PC-9 (cell line): ENCODE measurements at regions of chrX and their contacts with region 1.

Region 1: GRCh38 chrX:154484255-154485154 is 1.9 kb downstream of the UBL4A start:
- DNase-seq: peak in 1 of 2 experiments; percentile 71
- H3K4me3 ChIP-seq: no peak overlapping the region
- H3K27ac ChIP-seq: no peak overlapping the region
- H3K4me1 ChIP-seq: peaks cover 24% of the 10 kb centered on the region
- H3K27me3 ChIP-seq: no peaks in the 10 kb centered on the region
- CTCF ChIP-seq: no peak

Region 2: GRCh38 chrX:154419732-154420364 is 64.7 kb before region 1 on chrX:
- CTCF ChIA-PET with region 1: no interaction called
- POLR2A ChIA-PET with region 1: no interaction called
- intact Hi-C with region 1: no loop called
- DNase-seq: no peak
- H3K4me3 ChIP-seq: no peak overlapping the region
- H3K27ac ChIP-seq: no peak overlapping the region
- H3K4me1 ChIP-seq: no peaks in the 10 kb centered on the region
- H3K27me3 ChIP-seq: no peaks in the 10 kb centered on the region
- CTCF ChIP-seq: no peak

Region 3: GRCh38 chrX:154458114-154458953 is 26.2 kb before region 1 on chrX and contains the start of gene PLXNA3:
- CTCF ChIA-PET with region 1: no interaction called
- POLR2A ChIA-PET with region 1: interaction called, 9 read pairs
- intact Hi-C with region 1: loop called (anchors 2 kb)
- DNase-seq: peak in 1 of 2 experiments; percentile 76
- H3K4me3 ChIP-seq: peak within 1 kb of the TSS; percentile 66
- H3K27ac ChIP-seq: no peak within 1 kb of the TSS
- H3K4me1 ChIP-seq: peaks cover 5% of the 10 kb centered on the region
- H3K27me3 ChIP-seq: no peaks in the 10 kb centered on the region
- CTCF ChIP-seq: no peak
- total RNA-seq, gene PLXNA3: 109 and 124 TPM in 2 replicates

Region 4: DNA sequence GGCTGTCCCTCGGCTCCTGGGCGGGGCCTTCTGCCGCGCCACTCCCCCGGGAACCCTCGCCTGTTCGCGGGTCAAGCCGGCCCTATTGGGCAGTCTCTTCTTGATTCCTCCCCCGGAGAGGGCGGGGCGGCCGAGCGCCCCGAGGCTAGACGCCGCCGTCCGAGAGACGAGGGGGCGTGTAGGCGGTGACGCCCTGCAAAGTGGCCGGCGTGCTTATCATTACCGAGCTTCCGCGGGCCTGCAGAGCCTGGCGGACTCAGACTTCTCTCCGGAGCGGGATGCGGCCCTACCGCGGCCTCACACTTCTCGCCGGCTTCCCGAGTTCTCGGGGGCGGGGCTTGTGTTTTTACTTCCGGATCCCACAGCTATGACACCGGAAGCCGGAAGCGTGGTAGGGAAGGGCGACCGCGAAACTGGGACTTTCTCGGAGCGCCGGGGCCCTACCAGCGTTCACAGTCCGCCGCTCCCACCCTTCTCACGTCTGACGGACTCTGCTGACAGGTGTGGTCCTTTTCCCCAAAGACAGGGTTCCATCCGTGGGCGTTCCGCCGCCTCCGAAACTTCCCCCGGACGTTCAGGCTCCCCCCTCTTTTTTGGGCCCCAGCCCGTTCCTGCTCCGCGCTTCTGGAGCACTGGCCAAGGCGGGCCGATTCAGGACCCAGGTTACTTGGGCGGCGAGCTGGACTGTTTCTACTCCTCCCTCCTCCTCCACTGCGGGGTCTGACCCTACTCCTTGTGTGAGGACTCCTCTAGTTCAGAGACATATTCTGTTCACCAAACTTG is 62.9 kb after region 1 on chrX and contains the start of gene IKBKG:
- CTCF ChIA-PET with region 1: no interaction called
- POLR2A ChIA-PET with region 1: interaction called, 23 read pairs
- intact Hi-C with region 1: no loop called
- DNase-seq: peak; percentile 82 to 98
- H3K4me3 ChIP-seq: peak within 1 kb of the TSS; percentile 99
- H3K27ac ChIP-seq: peak within 1 kb of the TSS; percentile 100
- H3K4me1 ChIP-seq: peaks cover 27% of the 10 kb centered on the region
- H3K27me3 ChIP-seq: no peaks in the 10 kb centered on the region
- CTCF ChIP-seq: no peak
- total RNA-seq, gene IKBKG: 68.3 and 69.4 TPM in 2 replicates

Region 5: GRCh38 chrX:154762523-154763289 is 278.2 kb after region 1 on chrX and contains the start of gene DKC1:
- CTCF ChIA-PET with region 1: no interaction called
- POLR2A ChIA-PET with region 1: no interaction called
- intact Hi-C with region 1: no loop called
- DNase-seq: peak; percentile 89 to 99
- H3K4me3 ChIP-seq: peak within 1 kb of the TSS; percentile 89
- H3K27ac ChIP-seq: peak within 1 kb of the TSS; percentile 77
- H3K4me1 ChIP-seq: peaks cover 15% of the 10 kb centered on the region
- H3K27me3 ChIP-seq: no peaks in the 10 kb centered on the region
- CTCF ChIP-seq: 0 out of 2 replicates have a peak, but pooled peaks have one; percentile 6
- total RNA-seq, gene DKC1: 83.5 and 101 TPM in 2 replicates